ENCODE measurements at regions of chr16 and their contacts with region 1.

Region 1: GRCh38 chr16:3389663-3390338 is 11.0 kb downstream of the ZSCAN32 start:
- DNase-seq: no peak

Region 2: GRCh38 chr16:3305109-3306068 is 84.4 kb before region 1 on chr16 and contains the starts of genes TIGD7 and ZNF75A:
- intact Hi-C with region 1: loop called (anchors 5 to 10 kb)
- DNase-seq: peak; percentile 95
- total RNA-seq, gene TIGD7: 6.4 to 9.1 TPM
- total RNA-seq, gene ZNF75A: 17.5 to 21.3 TPM

Region 3: GRCh38 chr16:3311496-3311895 is 78.3 kb before region 1 on chr16:
- intact Hi-C with region 1: loop called (anchors 5 to 10 kb)
- DNase-seq: no peak

Region 4: DNA sequence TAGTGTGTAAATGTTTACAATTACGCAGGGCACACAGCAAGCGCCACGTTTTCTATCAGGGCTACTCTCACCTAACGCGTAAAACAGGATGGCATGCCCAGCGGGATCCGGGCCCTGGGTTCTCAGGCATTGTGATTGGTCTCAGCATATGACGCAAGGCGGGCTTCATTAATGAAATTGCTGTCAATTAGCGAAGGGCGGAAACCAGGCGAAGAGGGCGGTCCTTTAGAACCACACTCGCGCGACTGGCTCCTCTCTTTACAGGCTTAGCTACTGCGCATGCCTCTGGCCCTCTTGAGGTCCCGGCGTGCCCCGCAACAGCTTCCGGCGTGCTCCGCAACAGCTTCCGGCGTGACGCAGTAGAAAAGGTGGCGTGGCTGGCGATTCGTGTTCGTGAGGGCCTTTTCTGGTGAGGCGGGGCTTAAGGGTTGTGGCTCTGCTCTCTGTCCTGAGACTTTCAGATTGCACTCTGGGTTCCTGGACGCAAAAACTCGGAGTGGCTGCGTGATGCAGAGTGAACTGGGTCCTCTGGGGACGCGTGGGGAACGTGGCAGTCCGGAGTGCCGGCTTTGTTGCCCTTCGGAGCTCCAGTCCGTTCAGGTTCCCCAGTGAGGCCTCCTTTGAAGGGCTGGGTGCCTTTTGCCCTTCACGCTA is 24.9 kb before region 1 on chr16:
- intact Hi-C with region 1: no loop called
- DNase-seq: peak; percentile 95

Region 5: GRCh38 chr16:3454099-3454498 is 64.3 kb after region 1 on chr16:
- intact Hi-C with region 1: no loop called
- DNase-seq: no peak